CD8-positive, alpha-beta T cell (primary cell): ENCODE measurements at regions of chr16 and their contacts with region 1.

Region 1: GRCh38 chr16:502179-502943 is 25.2 kb upstream of the CAPN15 start:
- DNase-seq: no peak
- ATAC-seq: no peak
- H3K4me3 ChIP-seq: no peak overlapping the region
- H3K4me3 Mint-ChIP-seq: no peak overlapping the region
- H3K27ac ChIP-seq: no peak overlapping the region
- H3K27ac Mint-ChIP-seq: no peak overlapping the region
- H3K4me1 ChIP-seq: no peaks in the 10 kb centered on the region
- H3K4me1 Mint-ChIP-seq: no peaks in the 10 kb centered on the region
- H3K27me3 ChIP-seq: no peaks in the 10 kb centered on the region
- H3K27me3 Mint-ChIP-seq: no peaks in the 10 kb centered on the region
- CTCF ChIP-seq: no peak

Region 2: DNA sequence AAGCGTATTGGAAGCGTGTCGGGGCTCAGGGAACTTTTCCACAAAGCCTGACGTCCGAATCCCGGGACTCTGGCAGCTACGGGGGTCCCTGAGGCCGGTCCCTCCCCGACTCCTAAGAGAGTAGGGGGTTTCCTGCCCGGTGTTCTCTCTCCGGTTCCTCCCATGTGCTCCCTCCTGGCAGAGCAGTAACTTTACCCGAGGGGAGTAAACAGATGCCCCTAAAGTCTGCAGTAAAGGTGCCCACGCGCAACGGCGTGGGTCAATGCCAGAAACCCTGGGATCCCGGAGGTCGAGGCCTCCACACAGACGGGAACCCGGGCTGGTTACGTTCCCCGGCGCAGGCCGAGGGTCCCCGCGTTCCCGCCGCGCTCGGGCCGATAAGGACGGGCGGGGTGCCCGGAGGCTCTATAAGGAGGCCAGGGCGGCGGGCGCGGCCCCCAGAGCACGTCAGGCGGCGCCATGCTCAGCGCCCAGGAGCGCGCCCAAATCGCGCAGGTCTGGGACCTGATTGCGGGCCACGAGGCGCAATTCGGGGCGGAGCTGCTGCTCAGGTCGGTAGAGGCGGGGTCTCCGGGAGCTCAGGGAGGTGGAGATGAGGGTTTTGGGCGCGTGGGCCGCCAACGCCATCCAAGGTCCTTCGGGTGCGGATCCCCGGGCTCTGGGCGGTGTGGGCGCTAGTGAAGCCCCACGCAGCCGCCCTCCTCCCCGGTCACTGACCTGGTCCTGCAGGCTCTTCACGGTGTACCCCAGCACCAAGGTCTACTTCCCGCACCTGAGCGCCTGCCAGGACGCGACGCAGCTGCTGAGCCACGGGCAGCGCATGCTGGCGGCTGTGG is 336.6 kb before region 1 on chr16 and contains the start of gene HBM:
- CTCF ChIA-PET with region 1: no interaction called
- POLR2A ChIA-PET with region 1: no interaction called
- intact Hi-C with region 1: no loop called
- DNase-seq: peak in 2 of 9 experiments; percentile 32 to 37
- ATAC-seq: peak; percentile 37
- H3K4me3 ChIP-seq: peak within 1 kb of the TSS in 1 of 2 experiments; percentile 22
- H3K4me3 Mint-ChIP-seq: peak within 1 kb of the TSS; percentile 55
- H3K27ac ChIP-seq: no peak within 1 kb of the TSS
- H3K27ac Mint-ChIP-seq: no peak within 1 kb of the TSS
- H3K4me1 ChIP-seq: peaks cover 19% of the 10 kb centered on the region
- H3K4me1 Mint-ChIP-seq: peaks cover 4% of the 10 kb centered on the region
- H3K27me3 ChIP-seq: peaks cover 29 to 34% of the 10 kb centered on the region in 2 experiments
- H3K27me3 Mint-ChIP-seq: peaks cover 51% of the 10 kb centered on the region
- CTCF ChIP-seq: no peak
- total RNA-seq, gene HBM: not detected

Region 3: GRCh38 chr16:297832-298417 is 204.4 kb before region 1 on chr16:
- CTCF ChIA-PET with region 1: no interaction called
- POLR2A ChIA-PET with region 1: no interaction called
- intact Hi-C with region 1: no loop called
- DNase-seq: no peak
- ATAC-seq: no peak
- H3K4me3 ChIP-seq: no peak overlapping the region
- H3K4me3 Mint-ChIP-seq: no peak overlapping the region
- H3K27ac ChIP-seq: no peak overlapping the region
- H3K27ac Mint-ChIP-seq: no peak overlapping the region
- H3K4me1 ChIP-seq: no peaks in the 10 kb centered on the region
- H3K4me1 Mint-ChIP-seq: no peaks in the 10 kb centered on the region
- H3K27me3 ChIP-seq: no peaks in the 10 kb centered on the region
- H3K27me3 Mint-ChIP-seq: no peaks in the 10 kb centered on the region
- CTCF ChIP-seq: no peak

Region 4: DNA sequence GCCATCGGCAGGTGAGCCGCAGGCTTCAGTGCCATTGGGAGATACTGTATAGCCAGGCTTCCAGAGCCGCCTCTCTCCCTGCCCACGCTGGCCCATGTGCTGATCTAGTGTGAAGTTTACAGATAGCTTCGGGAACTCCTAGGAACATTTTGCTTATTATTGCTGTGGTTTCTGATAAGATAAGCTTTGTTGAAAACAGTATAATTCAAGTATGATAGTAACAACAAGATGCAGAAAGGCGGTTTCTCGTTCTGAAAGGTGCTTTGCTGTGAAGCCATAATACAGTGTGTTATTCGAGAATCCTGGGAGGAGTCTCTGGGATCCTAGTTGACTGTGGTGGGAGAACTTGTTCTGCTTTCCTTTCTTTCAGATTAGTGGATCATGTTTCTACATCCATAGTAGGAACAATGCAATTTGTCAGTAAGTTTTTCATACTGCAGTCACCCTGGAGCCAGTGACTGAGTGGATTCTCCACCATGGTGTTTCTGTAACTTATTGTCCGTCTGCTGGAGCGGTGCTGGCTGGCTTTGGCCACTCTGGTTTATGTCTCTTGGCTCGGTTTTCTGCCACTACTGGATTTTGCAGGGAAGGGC is 45.4 kb before region 1 on chr16:
- CTCF ChIA-PET with region 1: no interaction called
- POLR2A ChIA-PET with region 1: no interaction called
- intact Hi-C with region 1: loop called in 1 of 2 experiments (anchors 5 kb)
- DNase-seq: no peak
- ATAC-seq: no peak
- H3K4me3 ChIP-seq: no peak overlapping the region
- H3K4me3 Mint-ChIP-seq: no peak overlapping the region
- H3K27ac ChIP-seq: no peak overlapping the region
- H3K27ac Mint-ChIP-seq: peak overlapping the region; percentile 2
- H3K4me1 ChIP-seq: no peaks in the 10 kb centered on the region
- H3K4me1 Mint-ChIP-seq: peaks cover 9% of the 10 kb centered on the region
- H3K27me3 ChIP-seq: no peaks in the 10 kb centered on the region
- H3K27me3 Mint-ChIP-seq: no peaks in the 10 kb centered on the region
- CTCF ChIP-seq: no peak

Region 5: GRCh38 chr16:546909-547770 is 44.8 kb after region 1 on chr16:
- CTCF ChIA-PET with region 1: no interaction called
- POLR2A ChIA-PET with region 1: no interaction called
- intact Hi-C with region 1: no loop called
- DNase-seq: peak in 7 of 9 experiments; percentile 29 to 69 (median 63)
- ATAC-seq: peak; percentile 76
- H3K4me3 ChIP-seq: no peak overlapping the region
- H3K4me3 Mint-ChIP-seq: no peak overlapping the region
- H3K27ac ChIP-seq: no peak overlapping the region
- H3K27ac Mint-ChIP-seq: no peak overlapping the region
- H3K4me1 ChIP-seq: no peaks in the 10 kb centered on the region
- H3K4me1 Mint-ChIP-seq: no peaks in the 10 kb centered on the region
- H3K27me3 ChIP-seq: no peaks in the 10 kb centered on the region
- H3K27me3 Mint-ChIP-seq: no peaks in the 10 kb centered on the region
- CTCF ChIP-seq: no peak